ENCODE measurements at regions of chr19 and their contacts with region 1.

Region 1: DNA sequence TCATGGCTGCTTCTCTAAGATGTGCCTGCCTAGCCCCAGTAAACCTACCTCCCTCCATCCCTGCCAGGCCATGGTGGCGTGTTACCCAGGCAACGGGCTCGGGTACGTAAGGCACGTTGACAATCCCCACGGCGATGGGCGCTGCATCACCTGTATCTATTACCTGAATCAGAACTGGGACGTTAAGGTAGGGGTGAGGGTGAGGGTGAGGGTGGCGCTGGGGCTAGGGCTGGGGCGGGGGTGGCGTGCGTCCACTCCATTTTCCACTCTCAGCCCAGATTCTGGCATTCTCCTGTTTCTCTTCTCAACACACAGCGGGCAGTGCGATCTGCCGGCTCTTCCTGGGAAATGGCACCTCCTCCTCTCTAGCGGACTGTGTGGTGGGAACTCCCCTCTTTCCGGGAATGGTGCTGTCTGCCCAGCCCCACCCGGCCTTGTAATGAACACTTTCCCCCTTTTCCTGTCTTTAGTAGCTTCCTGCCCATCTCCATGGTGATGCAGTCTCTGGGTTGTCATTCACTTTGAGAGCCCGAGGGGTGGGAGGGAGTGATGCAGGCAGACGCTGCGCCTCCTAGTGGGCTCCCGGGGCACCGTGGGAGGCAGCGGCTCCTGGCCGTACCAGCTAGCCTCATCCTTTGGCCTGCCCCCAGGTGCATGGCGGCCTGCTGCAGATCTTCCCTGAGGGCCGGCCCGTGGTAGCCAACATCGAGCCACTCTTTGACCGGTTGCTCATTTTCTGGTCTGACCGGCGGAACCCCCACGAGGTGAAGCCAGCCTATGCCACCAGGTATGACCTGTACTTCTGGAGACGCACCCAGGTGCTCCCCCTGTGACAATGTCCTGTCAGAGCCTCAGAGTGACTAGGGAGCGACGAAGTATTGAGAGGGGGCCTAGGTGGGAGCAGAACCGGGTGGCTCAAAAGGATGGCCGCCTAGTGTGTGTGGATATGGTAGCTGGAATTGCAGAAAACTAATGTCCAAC is 7.8 kb downstream of the EGLN2 start:
- DNase-seq: peak; percentile 71 to 84 (median 73)
- H3K4me3 ChIP-seq: peak overlapping the region in 1 of 3 experiments; percentile 12
- H3K4me3 Mint-ChIP-seq: peak overlapping the region; percentile 24 to 72
- H3K27ac ChIP-seq: peak overlapping the region; percentile 19 to 24
- H3K27ac Mint-ChIP-seq: peak overlapping the region; percentile 65 to 90 (median 83)
- H3K4me1 ChIP-seq: peaks cover 58 to 69% of the 10 kb centered on the region in 2 donors
- H3K4me1 Mint-ChIP-seq: peaks cover 82% of the 10 kb centered on the region
- H3K27me3 ChIP-seq: no peaks in the 10 kb centered on the region
- H3K27me3 Mint-ChIP-seq: peaks cover 2 to 7% (median 4%) of the 10 kb centered on the region in 3 donors
- CTCF ChIP-seq: peak; percentile 95

Region 2: DNA sequence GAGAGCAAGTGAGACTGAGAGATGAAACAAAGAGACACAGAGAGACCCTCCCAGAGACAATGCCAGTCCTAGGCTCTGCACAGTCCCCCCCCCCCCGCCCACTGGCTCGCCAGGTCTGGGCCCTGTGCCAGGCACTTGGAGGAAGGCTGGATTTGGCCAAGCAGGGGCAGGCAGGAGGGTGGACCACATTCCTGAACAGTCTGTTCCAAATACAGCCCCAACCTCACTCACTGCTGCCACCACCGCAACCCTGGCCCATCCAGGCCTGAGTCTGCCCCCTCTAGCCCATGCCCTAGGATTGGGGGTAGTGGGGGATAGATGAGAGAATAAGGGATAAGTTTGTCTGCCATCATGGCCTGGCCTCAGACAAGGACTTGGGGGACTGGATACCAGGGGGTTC is 326.5 kb after region 1 on chr19:
- intact Hi-C with region 1: loop called in 1 of 2 experiments (anchors 5 kb)
- DNase-seq: no peak
- H3K4me3 ChIP-seq: no peak overlapping the region
- H3K4me3 Mint-ChIP-seq: peak overlapping the region; percentile 58 to 62
- H3K27ac ChIP-seq: no peak overlapping the region
- H3K27ac Mint-ChIP-seq: peak overlapping the region in 1 of 7 donors; percentile 41
- H3K4me1 ChIP-seq: peaks cover 11 to 20% of the 10 kb centered on the region in 2 donors
- H3K4me1 Mint-ChIP-seq: peaks cover 18% of the 10 kb centered on the region
- H3K27me3 ChIP-seq: peaks cover 0 to 7% of the 10 kb centered on the region in 2 donors
- H3K27me3 Mint-ChIP-seq: peaks cover 38 to 45% (median 41%) of the 10 kb centered on the region in 3 donors
- CTCF ChIP-seq: no peak

Measured in CD14-positive monocyte (primary cell).